GM18951 (cell line): ENCODE measurements at regions of chr12 and their contacts with region 1.

Region 1: DNA sequence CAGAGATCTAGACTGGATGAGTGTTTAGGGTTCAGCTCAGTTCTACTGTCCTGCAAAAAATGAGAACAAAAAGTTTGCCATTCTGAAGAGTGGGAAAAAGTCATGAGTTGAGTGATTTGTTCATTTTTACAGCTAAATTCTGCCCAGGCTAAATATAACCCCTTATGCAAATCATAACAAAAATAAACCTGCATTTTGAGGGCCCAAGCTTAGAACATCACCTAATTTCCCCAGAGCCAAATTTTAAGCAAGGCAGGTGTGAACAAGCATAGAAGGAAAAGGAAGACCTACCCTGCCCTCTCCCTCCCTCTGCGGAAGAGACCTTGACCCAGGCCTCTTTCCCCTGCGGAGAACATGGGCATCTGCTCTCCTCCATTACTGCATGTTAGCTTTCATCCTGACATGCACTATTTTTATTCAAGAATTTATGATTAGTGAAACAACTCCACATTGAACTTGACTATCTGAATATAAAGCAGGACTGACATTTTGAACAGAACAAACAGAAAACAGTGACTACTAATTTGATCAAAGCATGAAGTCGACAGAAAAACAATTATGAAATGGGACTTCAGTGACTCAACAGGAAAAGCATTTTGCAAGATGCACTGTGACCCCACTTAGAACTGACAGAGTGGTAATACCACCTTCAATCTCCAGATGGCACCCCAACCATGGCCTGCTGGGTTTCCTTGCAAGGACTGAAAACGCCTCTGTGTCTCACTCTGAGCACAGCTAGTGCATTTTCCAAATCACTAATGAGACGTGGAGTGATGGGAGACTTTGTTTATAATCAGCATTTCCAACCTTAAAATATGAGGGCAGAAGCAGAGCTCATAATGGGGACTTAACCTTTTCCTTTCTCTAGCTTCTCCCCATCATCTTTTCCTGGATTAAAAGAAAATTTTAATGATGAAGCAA is 30.9 kb upstream of the SELPLG start:
- POLR2A ChIP-seq: peak; percentile 38

Region 2: DNA sequence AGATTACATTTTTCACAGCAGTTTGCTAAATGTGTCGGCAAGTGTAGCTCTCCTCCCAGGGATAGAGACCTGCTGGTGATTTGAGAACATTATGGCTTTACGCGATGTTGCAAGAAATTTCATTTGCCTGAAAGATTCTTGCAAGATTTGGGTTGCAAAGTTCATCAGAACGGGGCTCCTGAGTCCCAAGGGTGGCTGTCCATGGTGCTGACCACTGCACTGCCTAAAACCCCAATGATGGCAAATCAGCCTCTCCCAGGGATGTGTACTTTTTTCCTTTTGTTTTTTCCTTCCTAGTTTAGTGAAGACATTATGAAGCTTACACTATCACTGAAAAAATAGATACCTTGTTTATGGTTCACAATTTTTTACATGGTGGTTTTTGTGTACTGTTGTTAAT is 450.1 kb before region 1 on chr12:
- in situ Hi-C with region 1: no loop called
- POLR2A ChIP-seq: no peak

Region 3: DNA sequence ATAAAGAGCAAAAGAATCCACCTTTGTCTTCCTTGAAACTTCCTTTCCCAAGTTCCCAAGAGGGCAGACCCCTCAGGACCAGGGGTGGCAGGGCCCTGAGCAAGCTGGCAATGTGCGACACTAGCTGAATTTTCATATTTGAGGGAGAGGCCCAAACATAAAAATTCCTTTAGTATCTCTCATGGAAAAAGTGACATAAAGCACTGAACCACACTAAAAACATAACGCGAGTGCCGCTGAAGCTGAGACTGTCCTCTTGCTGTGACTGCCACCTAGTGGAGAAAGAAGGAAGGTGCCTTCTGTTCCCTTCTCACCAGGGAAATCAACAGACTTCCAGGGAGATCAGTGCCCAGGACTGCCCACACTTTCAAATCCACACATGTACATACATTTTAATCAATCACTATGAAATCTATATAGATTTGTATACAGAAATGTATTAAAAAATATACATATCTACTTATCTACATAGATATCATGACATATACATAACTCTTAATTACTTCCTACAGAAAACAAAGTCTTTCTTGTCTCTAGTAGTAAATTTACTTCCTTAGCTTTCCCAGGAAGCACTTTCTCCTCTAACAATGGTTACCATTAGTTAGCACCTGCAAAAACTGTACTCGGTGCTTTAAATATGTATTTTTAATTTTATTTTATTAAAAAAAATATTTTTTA is 139.0 kb after region 1 on chr12:
- in situ Hi-C with region 1: loop called (anchors 10 kb)
- POLR2A ChIP-seq: no peak

Region 4: DNA sequence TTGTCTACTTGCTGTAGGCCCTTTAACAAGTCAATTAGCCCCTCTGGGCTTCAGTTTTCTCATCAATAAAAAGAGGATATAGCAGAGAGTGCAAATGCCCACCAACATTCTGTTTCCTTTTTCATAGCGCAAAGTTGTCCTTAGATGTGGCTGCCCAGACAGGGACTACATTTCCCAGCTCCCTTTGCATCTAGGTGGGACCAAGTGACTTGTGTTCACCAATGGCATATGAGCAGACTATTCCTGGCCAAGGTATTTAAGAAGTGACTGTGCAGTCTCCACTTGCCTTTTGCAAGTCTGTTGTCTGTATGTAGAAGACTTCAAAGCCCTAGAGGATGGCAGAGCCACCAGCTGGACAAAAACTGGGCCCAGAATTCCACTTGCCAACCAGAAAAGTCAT is 275.0 kb after region 1 on chr12:
- in situ Hi-C with region 1: loop called (anchors 25 kb)
- POLR2A ChIP-seq: no peak

Region 5: GRCh38 chr12:109052414-109053323 is 388.1 kb after region 1 on chr12 and contains the start of gene USP30:
- in situ Hi-C with region 1: loop called (anchors 25 kb)
- POLR2A ChIP-seq: peak; percentile 25

Region 6: DNA sequence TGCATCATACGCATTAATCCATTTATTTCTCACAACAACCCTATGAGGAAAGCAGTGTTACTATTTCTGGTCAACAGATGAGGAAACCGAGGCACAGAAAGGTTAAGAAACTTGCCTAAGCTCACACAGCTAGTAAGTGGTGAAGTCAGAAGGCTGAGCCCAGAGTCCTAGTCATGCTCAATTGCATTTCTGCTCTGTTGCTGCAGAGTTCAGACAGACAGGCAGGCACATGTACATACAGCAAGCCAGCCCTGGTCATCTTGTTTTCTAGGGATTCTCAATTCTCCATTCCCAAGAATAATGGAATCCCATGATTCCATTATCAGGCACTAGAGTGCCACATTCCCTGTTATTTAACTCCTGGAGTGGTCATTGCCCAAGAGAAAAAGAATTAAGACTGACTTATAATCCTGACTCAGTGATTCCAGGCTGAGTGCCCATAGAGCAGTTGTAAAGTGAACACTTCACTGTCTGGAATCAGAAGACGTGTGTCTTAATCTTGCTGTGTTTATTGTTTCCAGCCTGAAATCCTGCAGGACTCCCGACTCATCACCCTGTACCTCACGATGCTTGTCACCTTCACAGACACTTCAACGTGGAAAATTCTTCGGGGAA is 823.6 kb after region 1 on chr12:
- in situ Hi-C with region 1: no loop called
- POLR2A ChIP-seq: no peak